Caco-2 (cell line): ENCODE measurements at regions of chr17 and their contacts with region 1.

Region 1: DNA sequence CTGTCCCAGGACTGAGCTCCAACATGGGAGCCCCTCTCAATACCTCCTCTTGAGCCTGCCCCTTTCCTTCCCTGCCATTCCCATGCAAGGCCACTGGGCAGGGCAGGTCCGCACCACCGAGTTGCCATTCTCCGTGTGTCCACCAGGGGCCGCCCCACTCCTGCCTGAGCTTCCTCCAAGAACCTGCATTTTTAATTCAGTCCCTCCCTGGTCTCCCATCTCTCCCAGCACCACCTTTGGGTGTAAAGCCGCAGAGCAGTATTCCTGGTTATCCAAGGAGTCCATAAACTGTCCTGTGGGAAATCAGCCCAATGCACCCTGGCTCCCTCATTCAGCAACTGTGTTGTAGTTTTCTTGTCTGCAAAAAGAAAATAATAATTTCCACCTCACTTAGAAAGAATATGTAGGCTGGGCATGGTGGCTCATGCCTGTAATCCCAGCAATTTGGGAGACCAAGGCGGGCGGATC is 15.9 kb upstream of the ANKRD40CL start:
- DNase-seq: peak; percentile 98 to 100
- H3K4me3 ChIP-seq: no peak overlapping the region
- H3K4me3 Mint-ChIP-seq: no peak overlapping the region
- H3K27ac Mint-ChIP-seq: no peak overlapping the region
- H3K4me1 ChIP-seq: no peaks in the 10 kb centered on the region
- H3K4me1 Mint-ChIP-seq: peaks cover 11% of the 10 kb centered on the region
- H3K27me3 ChIP-seq: no peaks in the 10 kb centered on the region
- H3K27me3 Mint-ChIP-seq: no peaks in the 10 kb centered on the region
- CTCF ChIP-seq: peak; percentile 100

Region 2: GRCh38 chr17:50560185-50560824 is 222.9 kb before region 1 on chr17 and contains the start of gene CACNA1G:
- CTCF ChIA-PET with region 1: interaction called, 10 read pairs
- POLR2A ChIA-PET with region 1: no interaction called
- intact Hi-C with region 1: no loop called
- DNase-seq: peak; percentile 97 to 100
- H3K4me3 ChIP-seq: peak within 1 kb of the TSS; percentile 41
- H3K4me3 Mint-ChIP-seq: peak within 1 kb of the TSS; percentile 87
- H3K27ac Mint-ChIP-seq: peak within 1 kb of the TSS; percentile 52
- H3K4me1 ChIP-seq: peaks cover 16% of the 10 kb centered on the region
- H3K4me1 Mint-ChIP-seq: peaks cover 7% of the 10 kb centered on the region
- H3K27me3 ChIP-seq: peaks cover 12% of the 10 kb centered on the region
- H3K27me3 Mint-ChIP-seq: peaks cover 16% of the 10 kb centered on the region
- CTCF ChIP-seq: no peak
- total RNA-seq, gene CACNA1G: 1.4 and 1.6 TPM in 2 replicates

Region 3: GRCh38 chr17:50765454-50766221 is 17.6 kb before region 1 on chr17:
- CTCF ChIA-PET with region 1: interaction called, 49 read pairs
- POLR2A ChIA-PET with region 1: interaction called, 7 read pairs
- intact Hi-C with region 1: loop called (anchors 1 kb)
- DNase-seq: peak in 1 of 2 experiments; percentile 47
- H3K4me3 ChIP-seq: no peak overlapping the region; the same call in 1 of the 2 replicates
- H3K4me3 Mint-ChIP-seq: peak overlapping the region; percentile 25
- H3K27ac Mint-ChIP-seq: peak overlapping the region; percentile 81
- H3K4me1 ChIP-seq: peaks cover 67% of the 10 kb centered on the region
- H3K4me1 Mint-ChIP-seq: peaks cover 55% of the 10 kb centered on the region
- H3K27me3 ChIP-seq: no peaks in the 10 kb centered on the region
- H3K27me3 Mint-ChIP-seq: no peaks in the 10 kb centered on the region
- CTCF ChIP-seq: no peak

Region 4: GRCh38 chr17:50834429-50835300 is 51.4 kb after region 1 on chr17:
- CTCF ChIA-PET with region 1: interaction called, 247 read pairs
- POLR2A ChIA-PET with region 1: no interaction called
- intact Hi-C with region 1: no loop called
- DNase-seq: no peak
- H3K4me3 ChIP-seq: no peak overlapping the region
- H3K4me3 Mint-ChIP-seq: no peak overlapping the region
- H3K27ac Mint-ChIP-seq: no peak overlapping the region
- H3K4me1 ChIP-seq: peaks cover 10% of the 10 kb centered on the region; the same call in 1 of the 2 replicates
- H3K4me1 Mint-ChIP-seq: peaks cover 7% of the 10 kb centered on the region
- H3K27me3 ChIP-seq: no peaks in the 10 kb centered on the region
- H3K27me3 Mint-ChIP-seq: no peaks in the 10 kb centered on the region
- CTCF ChIP-seq: no peak

Region 5: GRCh38 chr17:50883850-50884438 is 100.7 kb after region 1 on chr17:
- CTCF ChIA-PET with region 1: interaction called, 11 read pairs
- POLR2A ChIA-PET with region 1: no interaction called
- intact Hi-C with region 1: no loop called
- DNase-seq: peak; percentile 71 to 78
- H3K4me3 ChIP-seq: no peak overlapping the region
- H3K4me3 Mint-ChIP-seq: peak overlapping the region; percentile 44
- H3K27ac Mint-ChIP-seq: peak overlapping the region; percentile 96
- H3K4me1 ChIP-seq: peaks cover 47% of the 10 kb centered on the region
- H3K4me1 Mint-ChIP-seq: peaks cover 40% of the 10 kb centered on the region
- H3K27me3 ChIP-seq: no peaks in the 10 kb centered on the region
- H3K27me3 Mint-ChIP-seq: no peaks in the 10 kb centered on the region
- CTCF ChIP-seq: no peak